HEK293 (cell line): ENCODE measurements at regions of chr19 and their contacts with region 1.

Region 1: DNA sequence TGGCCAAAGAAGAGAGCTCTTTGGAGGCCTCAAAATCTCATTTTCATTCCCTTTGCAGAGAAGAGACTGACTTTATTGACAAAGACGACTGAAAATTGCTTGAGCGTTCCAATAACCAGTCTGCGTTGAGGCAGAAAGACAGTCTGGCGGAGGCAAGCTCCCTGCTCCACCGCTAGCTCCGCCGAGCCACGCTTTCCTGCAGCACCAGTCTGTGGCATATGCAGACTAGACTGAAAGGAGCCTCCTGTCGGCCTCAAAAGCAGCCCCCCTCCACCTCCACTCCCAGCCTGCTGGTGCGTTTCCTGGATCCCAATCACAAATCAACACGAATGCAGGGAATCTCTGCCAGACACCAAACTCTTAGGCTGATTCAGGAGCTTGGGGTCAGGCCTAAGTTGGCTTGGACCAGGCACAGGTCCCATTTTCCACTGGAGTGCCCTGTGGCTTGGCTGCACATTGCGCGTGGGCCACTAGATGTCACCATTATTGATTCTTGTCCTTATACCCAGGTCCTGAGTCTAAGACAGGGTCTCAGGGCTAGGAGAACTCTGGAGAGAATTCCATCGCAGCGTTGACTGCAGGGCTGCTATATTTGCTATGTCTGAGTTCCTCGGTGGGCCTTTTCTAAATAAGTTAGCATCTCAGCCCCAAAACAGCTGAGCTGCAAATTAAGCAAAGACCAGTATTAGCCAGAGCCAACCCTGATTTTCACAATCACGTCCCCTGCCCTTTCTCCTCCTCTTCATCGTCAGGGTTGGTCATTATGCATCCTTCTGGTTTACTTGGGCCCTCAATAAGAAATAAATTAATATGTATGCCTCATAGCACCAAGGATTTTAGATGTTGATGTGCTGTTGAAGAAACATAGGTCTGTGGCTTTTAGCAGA is 5.2 kb upstream of the ZNF507 start:
- H3K4me3 ChIP-seq: no peak overlapping the region
- H3K27ac ChIP-seq: no peak overlapping the region
- H3K4me1 ChIP-seq: peaks cover 7% of the 10 kb centered on the region
- CTCF ChIP-seq: peak; percentile 84

Region 2: GRCh38 chr19:32104153-32104849 is 235.9 kb before region 1 on chr19:
- CTCF ChIA-PET with region 1: no interaction called
- POLR2A ChIA-PET with region 1: no interaction called
- H3K4me3 ChIP-seq: no peak overlapping the region
- H3K27ac ChIP-seq: peak overlapping the region; percentile 13; the same call in 1 of the 2 replicates
- H3K4me1 ChIP-seq: peaks cover 31% of the 10 kb centered on the region
- CTCF ChIP-seq: no peak

Region 3: DNA sequence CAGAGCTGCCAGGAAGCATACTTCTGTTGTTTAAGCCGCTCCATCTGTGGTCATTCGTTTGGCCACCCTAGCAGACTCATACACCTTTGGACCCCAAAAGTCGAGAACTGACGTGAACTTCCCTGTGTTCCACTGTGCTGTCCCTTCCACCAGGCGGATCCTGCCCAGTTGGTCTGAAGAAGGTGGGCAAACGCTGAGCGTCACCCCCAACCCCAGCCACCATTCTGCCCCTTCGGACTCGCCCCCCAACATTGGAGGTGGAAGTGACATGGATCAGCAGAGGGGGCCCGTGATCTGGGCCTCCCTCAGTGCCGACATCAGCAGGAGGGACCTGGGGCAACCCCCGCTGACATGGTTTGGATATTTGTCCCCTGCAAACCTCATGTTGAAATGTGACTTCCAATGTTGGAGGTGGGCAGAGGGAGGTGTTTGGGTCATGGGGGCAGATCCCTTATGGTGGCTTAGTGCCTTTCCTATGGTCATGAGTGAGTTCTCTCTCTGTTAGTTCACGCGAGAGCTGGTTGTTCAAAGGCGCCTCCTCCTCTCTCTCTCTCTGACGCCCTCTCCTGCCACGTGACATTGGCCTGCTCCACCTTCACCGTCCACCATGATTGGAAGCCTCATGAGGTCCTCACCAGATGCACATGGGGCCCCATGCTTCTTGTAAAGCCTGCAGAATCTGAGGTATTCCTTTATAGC is 88.4 kb before region 1 on chr19:
- CTCF ChIA-PET with region 1: no interaction called
- POLR2A ChIA-PET with region 1: no interaction called
- H3K4me3 ChIP-seq: no peak overlapping the region
- H3K27ac ChIP-seq: no peak overlapping the region
- H3K4me1 ChIP-seq: no peaks in the 10 kb centered on the region
- CTCF ChIP-seq: no peak

Region 4: GRCh38 chr19:32273483-32273882 is 66.7 kb before region 1 on chr19:
- CTCF ChIA-PET with region 1: no interaction called
- POLR2A ChIA-PET with region 1: no interaction called
- H3K4me3 ChIP-seq: no peak overlapping the region
- H3K27ac ChIP-seq: no peak overlapping the region
- H3K4me1 ChIP-seq: no peaks in the 10 kb centered on the region; the same call in 1 of the 2 replicates
- CTCF ChIP-seq: no peak

Region 5: DNA sequence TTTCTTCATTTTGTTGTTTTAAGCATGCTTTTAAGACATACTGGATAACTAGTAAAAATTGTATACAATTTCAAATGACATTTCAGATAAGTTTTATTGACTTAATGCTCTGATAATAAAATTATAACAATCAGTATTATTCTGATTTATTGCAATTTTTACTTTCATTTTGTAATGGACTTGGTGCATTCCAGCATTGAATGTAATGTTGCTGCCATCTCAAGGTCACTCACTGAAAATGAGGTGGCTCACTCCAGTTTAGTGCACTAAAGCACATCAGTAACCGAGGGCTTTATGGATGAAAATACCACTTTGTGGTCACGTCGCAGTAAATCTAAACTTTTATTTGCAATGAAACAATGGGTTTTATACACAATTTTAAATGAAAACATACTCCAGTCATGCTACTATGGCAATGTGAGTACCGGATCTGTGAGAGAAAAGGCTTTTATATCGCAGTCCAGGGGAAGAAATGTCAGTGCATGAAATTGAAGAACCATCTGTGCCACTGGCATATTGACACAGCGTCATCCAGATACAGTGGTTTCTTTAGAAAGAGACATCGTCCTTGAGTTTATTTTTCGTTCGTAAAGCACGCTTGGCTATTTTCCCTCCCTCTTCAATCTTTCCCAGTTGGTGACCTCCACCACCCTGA is 15.5 kb before region 1 on chr19:
- CTCF ChIA-PET with region 1: interaction called, 23 read pairs
- POLR2A ChIA-PET with region 1: interaction called, 10 read pairs
- H3K4me3 ChIP-seq: no peak overlapping the region
- H3K27ac ChIP-seq: no peak overlapping the region
- H3K4me1 ChIP-seq: peaks cover 5% of the 10 kb centered on the region; the same call in 1 of the 2 replicates
- CTCF ChIP-seq: peak; percentile 76

Region 6: DNA sequence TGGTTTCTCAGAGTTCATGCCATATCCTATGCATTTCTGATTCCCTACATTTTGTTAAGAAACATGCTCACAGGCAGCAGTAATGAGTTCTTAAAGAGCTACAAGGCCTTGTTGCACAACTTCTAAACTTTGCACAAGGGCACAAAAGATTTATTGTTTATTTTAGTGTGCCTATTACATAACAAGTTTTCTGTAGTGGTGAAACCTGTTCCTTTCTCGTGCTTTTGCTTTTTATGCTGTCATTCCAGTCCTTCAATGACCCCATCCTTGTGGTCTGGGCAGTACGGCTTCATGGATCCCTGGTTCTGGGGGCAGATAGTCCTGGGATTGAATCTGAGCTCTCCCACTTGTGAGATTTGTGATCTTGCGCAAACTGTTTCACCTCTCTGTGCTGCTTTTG is 23.0 kb after region 1 on chr19:
- CTCF ChIA-PET with region 1: interaction called, 27 read pairs
- POLR2A ChIA-PET with region 1: interaction called, 3 read pairs
- H3K4me3 ChIP-seq: no peak overlapping the region
- H3K27ac ChIP-seq: peak overlapping the region; percentile 21; the same call in 1 of the 2 replicates
- H3K4me1 ChIP-seq: peaks cover 3% of the 10 kb centered on the region; the same call in 1 of the 2 replicates
- CTCF ChIP-seq: no peak

Region 7: GRCh38 chr19:32387701-32388392 is 47.6 kb after region 1 on chr19:
- CTCF ChIA-PET with region 1: interaction called, 26 read pairs
- POLR2A ChIA-PET with region 1: interaction called, 3 read pairs
- H3K4me3 ChIP-seq: no peak overlapping the region
- H3K27ac ChIP-seq: peak overlapping the region; percentile 25; the same call in 1 of the 2 replicates
- H3K4me1 ChIP-seq: peaks cover 22% of the 10 kb centered on the region
- CTCF ChIP-seq: no peak